ENCODE measurements at regions of chr17 and their contacts with region 1.

Region 1: DNA sequence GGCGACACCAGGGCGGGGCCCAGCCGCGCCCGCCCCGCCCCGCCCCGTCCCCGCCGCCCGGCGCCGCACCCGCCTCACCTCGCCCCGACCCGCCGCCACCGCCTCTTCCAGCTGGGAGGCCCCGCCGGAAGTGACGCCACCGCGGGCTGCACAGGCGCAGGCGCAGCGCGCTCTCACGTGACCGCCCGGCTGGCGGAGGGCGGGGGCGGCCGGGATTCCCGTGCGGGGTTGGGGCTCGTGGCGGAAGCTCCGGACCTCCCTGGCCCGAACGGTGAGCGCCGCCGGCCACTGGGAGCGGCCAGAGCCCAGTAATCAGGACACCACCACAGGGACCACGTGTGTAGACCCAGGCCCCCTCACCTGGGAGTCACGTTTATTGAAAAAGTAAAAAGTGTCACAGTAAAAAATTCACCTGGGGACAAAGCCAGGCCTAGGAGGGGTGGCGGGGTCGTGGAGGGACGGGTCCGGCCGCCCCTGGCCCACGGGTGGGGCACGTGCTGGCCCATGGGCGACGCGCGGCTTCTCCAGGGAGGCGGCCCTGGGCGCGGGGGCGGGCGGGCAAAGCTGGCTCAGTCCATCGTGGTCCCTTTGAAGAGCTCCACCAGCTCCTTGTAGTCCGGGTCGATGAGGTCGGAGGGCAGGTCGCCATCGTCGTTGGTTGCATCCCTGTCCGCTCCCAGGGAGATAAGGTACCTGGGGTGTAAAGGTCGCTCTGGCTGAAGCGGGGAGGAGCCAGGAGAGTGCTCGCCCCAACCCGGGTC is at the start of gene MCRIP1:
- DNase-seq: peak; percentile 98
- ATAC-seq: peak; percentile 78
- H3K4me3 Mint-ChIP-seq: peak within 1 kb of the TSS; percentile 87
- H3K27ac Mint-ChIP-seq: peak within 1 kb of the TSS; percentile 91
- H3K4me1 Mint-ChIP-seq: peaks cover 17% of the 10 kb centered on the region
- H3K27me3 Mint-ChIP-seq: no peaks in the 10 kb centered on the region
- total RNA-seq, gene MCRIP1: 45.8 to 50.4 TPM

Region 2: GRCh38 chr17:81222906-81223761 is 610.2 kb before region 1 on chr17 and contains the start of gene CEP131:
- CTCF ChIA-PET with region 1: no interaction called
- POLR2A ChIA-PET with region 1: no interaction called
- intact Hi-C with region 1: loop called in 1 of 2 experiments (anchors 1 kb)
- DNase-seq: peak; percentile 100
- ATAC-seq: peak; percentile 98
- H3K4me3 Mint-ChIP-seq: peak within 1 kb of the TSS; percentile 50
- H3K27ac Mint-ChIP-seq: peak within 1 kb of the TSS; percentile 76
- H3K4me1 Mint-ChIP-seq: peaks cover 19% of the 10 kb centered on the region
- H3K27me3 Mint-ChIP-seq: no peaks in the 10 kb centered on the region
- total RNA-seq, gene CEP131: 7.6 to 9.5 TPM

Region 3: GRCh38 chr17:81553018-81553615 is 280.2 kb before region 1 on chr17:
- CTCF ChIA-PET with region 1: no interaction called
- POLR2A ChIA-PET with region 1: no interaction called
- intact Hi-C with region 1: loop called in 1 of 2 experiments (anchors 1 kb)
- DNase-seq: peak; percentile 91
- ATAC-seq: peak; percentile 78
- H3K4me3 Mint-ChIP-seq: peak overlapping the region; percentile 89
- H3K27ac Mint-ChIP-seq: peak overlapping the region; percentile 86
- H3K4me1 Mint-ChIP-seq: peaks cover 38% of the 10 kb centered on the region
- H3K27me3 Mint-ChIP-seq: no peaks in the 10 kb centered on the region

Region 4: GRCh38 chr17:81702971-81703746 is 130.2 kb before region 1 on chr17 and contains the start of gene MRPL12:
- CTCF ChIA-PET with region 1: no interaction called
- POLR2A ChIA-PET with region 1: no interaction called
- intact Hi-C with region 1: loop called in 1 of 2 experiments (anchors 1 kb)
- DNase-seq: peak; percentile 95
- ATAC-seq: peak; percentile 89
- H3K4me3 Mint-ChIP-seq: peak within 1 kb of the TSS; percentile 86
- H3K27ac Mint-ChIP-seq: peak within 1 kb of the TSS; percentile 97
- H3K4me1 Mint-ChIP-seq: peaks cover 24% of the 10 kb centered on the region
- H3K27me3 Mint-ChIP-seq: no peaks in the 10 kb centered on the region
- total RNA-seq, gene MRPL12: 94.0 to 116 TPM

Region 5: GRCh38 chr17:81794509-81794908 is 38.8 kb before region 1 on chr17:
- CTCF ChIA-PET with region 1: no interaction called
- POLR2A ChIA-PET with region 1: no interaction called
- intact Hi-C with region 1: no loop called
- DNase-seq: no peak
- ATAC-seq: no peak
- H3K4me3 Mint-ChIP-seq: no peak overlapping the region
- H3K27ac Mint-ChIP-seq: no peak overlapping the region
- H3K4me1 Mint-ChIP-seq: no peaks in the 10 kb centered on the region
- H3K27me3 Mint-ChIP-seq: no peaks in the 10 kb centered on the region

Region 6: GRCh38 chr17:81844327-81844851 is 11.0 kb after region 1 on chr17:
- CTCF ChIA-PET with region 1: no interaction called
- POLR2A ChIA-PET with region 1: no interaction called
- intact Hi-C with region 1: no loop called
- DNase-seq: no peak
- ATAC-seq: no peak
- H3K4me3 Mint-ChIP-seq: no peak overlapping the region
- H3K27ac Mint-ChIP-seq: no peak overlapping the region
- H3K4me1 Mint-ChIP-seq: no peaks in the 10 kb centered on the region
- H3K27me3 Mint-ChIP-seq: no peaks in the 10 kb centered on the region

Region 7: GRCh38 chr17:81871387-81872230 is 38.3 kb after region 1 on chr17:
- CTCF ChIA-PET with region 1: no interaction called
- POLR2A ChIA-PET with region 1: interaction called, 6 read pairs
- intact Hi-C with region 1: loop called in 1 of 2 experiments (anchors 1 kb)
- DNase-seq: peak; percentile 98
- ATAC-seq: no peak
- H3K4me3 Mint-ChIP-seq: peak overlapping the region; percentile 81
- H3K27ac Mint-ChIP-seq: peak overlapping the region; percentile 92
- H3K4me1 Mint-ChIP-seq: peaks cover 34% of the 10 kb centered on the region
- H3K27me3 Mint-ChIP-seq: no peaks in the 10 kb centered on the region

Region 8: DNA sequence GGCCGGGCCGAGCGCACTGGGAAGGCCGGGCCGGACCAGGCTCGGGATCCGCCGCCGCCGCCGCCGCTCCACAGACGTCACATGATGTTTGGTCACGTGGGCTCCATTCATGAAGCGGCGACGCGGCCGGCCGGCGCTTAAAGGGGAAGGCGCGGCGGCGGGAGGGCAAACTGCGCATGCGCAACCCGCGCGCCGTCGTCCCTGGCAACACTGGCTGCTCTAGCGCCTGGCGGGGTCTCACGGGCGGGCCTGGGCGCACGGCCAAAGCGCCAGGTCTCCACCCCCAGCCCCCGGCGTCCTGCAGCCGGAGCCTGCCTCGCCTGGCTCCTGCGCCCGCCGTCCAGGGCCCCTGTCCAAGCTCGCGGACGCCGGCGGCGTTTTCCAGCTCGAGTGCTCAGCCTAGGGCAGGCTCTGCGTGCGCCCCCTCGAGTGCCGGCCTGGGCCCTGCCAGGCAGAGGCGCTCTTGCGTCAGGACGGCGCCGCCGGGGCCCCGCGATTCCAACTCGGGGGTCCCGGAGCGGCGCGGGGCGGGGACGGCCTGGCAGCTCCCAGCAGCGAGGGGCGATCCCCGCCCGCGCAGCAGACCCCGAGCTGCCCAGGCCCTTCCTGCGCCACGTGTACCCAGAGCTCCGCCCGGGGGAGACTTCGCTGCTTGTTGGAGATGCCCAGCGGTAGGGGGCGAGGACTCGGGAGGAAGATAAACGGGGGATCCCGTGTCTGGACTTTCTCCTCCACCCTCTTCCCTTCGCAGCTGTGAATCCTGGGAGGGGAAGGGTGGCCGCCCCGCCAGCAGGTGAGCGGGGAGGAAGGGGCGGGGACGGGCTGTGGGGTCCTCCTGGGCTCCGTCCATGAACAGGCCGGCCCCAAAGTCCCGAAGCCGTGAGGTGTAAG is 94.6 kb after region 1 on chr17 and contains the start of gene MAFG:
- CTCF ChIA-PET with region 1: no interaction called
- POLR2A ChIA-PET with region 1: no interaction called
- intact Hi-C with region 1: loop called in 1 of 2 experiments (anchors 1 kb)
- DNase-seq: peak; percentile 94
- ATAC-seq: peak; percentile 62
- H3K4me3 Mint-ChIP-seq: peak within 1 kb of the TSS; percentile 85
- H3K27ac Mint-ChIP-seq: peak within 1 kb of the TSS; percentile 85
- H3K4me1 Mint-ChIP-seq: peaks cover 32% of the 10 kb centered on the region
- H3K27me3 Mint-ChIP-seq: peaks cover 2% of the 10 kb centered on the region
- total RNA-seq, gene MAFG: 15.3 to 18.3 TPM

Region 9: GRCh38 chr17:82037113-82037888 is 204.0 kb after region 1 on chr17 and contains the start of gene DCXR:
- CTCF ChIA-PET with region 1: no interaction called
- POLR2A ChIA-PET with region 1: no interaction called
- intact Hi-C with region 1: loop called in 1 of 2 experiments (anchors 1 kb)
- DNase-seq: peak; percentile 97
- ATAC-seq: peak; percentile 97
- H3K4me3 Mint-ChIP-seq: peak within 1 kb of the TSS; percentile 82
- H3K27ac Mint-ChIP-seq: peak within 1 kb of the TSS; percentile 80
- H3K4me1 Mint-ChIP-seq: peaks cover 23% of the 10 kb centered on the region
- H3K27me3 Mint-ChIP-seq: no peaks in the 10 kb centered on the region
- total RNA-seq, gene DCXR: 105 to 166 TPM

Region 10: GRCh38 chr17:82273327-82274133 is 440.2 kb after region 1 on chr17 and contains the start of gene CSNK1D:
- CTCF ChIA-PET with region 1: no interaction called
- POLR2A ChIA-PET with region 1: no interaction called
- intact Hi-C with region 1: no loop called
- DNase-seq: peak; percentile 96
- ATAC-seq: peak; percentile 81
- H3K4me3 Mint-ChIP-seq: peak within 1 kb of the TSS; percentile 90
- H3K27ac Mint-ChIP-seq: peak within 1 kb of the TSS; percentile 94
- H3K4me1 Mint-ChIP-seq: peaks cover 39% of the 10 kb centered on the region
- H3K27me3 Mint-ChIP-seq: no peaks in the 10 kb centered on the region
- total RNA-seq, gene CSNK1D: 118 to 182 TPM